Caco-2 (cell line): ENCODE measurements at regions of chr10 and their contacts with region 1.

Region 1: DNA sequence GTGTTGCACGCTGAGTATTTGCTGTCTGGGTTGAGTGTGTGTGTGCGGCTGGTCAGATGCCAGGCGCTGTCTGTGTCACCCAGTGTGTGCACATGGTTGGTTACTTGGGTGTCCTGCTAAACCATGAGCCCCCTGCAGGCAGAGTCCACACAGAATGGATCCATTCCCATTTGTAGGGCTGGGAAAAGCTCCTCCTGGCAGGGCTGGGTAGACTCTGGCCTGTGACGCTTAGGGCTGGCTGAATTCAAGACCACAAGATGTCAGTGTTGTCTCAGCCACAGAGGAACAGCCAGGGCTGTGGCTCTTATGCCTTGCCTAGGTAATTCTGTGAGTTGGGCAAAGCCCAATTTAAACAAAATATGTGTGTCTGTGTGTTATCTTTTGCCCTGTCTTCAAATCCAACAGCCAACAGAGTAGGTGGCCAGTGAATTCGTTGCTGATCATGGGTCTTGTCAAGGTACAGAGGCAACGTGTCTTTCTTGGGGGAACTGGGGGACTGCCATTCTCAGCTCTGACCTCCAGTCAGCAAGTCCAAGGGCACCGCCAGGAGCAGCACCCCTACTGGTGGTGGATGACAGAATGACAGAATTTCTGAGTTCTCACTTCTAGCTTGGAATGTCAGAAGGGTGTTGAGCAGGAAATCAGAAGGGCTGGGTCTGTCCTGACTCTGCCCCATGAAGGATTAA is 285.1 kb downstream of the CCSER2 start:
- DNase-seq: peak; percentile 78
- H3K4me3 ChIP-seq: no peak overlapping the region
- H3K4me3 Mint-ChIP-seq: no peak overlapping the region
- H3K27ac Mint-ChIP-seq: no peak overlapping the region
- H3K4me1 ChIP-seq: no peaks in the 10 kb centered on the region
- H3K4me1 Mint-ChIP-seq: no peaks in the 10 kb centered on the region
- H3K27me3 ChIP-seq: no peaks in the 10 kb centered on the region
- H3K27me3 Mint-ChIP-seq: peaks cover 7% of the 10 kb centered on the region
- CTCF ChIP-seq: peak; percentile 77 to 80

Region 2: GRCh38 chr10:84264611-84265141 is 348.8 kb before region 1 on chr10:
- CTCF ChIA-PET with region 1: interaction called, 4 read pairs
- POLR2A ChIA-PET with region 1: no interaction called
- intact Hi-C with region 1: loop called (anchors 10 kb)
- DNase-seq: peak; percentile 63 to 75
- H3K4me3 ChIP-seq: no peak overlapping the region
- H3K4me3 Mint-ChIP-seq: no peak overlapping the region
- H3K27ac Mint-ChIP-seq: no peak overlapping the region
- H3K4me1 ChIP-seq: no peaks in the 10 kb centered on the region
- H3K4me1 Mint-ChIP-seq: peaks cover 13% of the 10 kb centered on the region
- H3K27me3 ChIP-seq: no peaks in the 10 kb centered on the region; the same call in 1 of the 2 replicates
- H3K27me3 Mint-ChIP-seq: peaks cover 4% of the 10 kb centered on the region
- CTCF ChIP-seq: peak; percentile 94 to 96

Region 3: DNA sequence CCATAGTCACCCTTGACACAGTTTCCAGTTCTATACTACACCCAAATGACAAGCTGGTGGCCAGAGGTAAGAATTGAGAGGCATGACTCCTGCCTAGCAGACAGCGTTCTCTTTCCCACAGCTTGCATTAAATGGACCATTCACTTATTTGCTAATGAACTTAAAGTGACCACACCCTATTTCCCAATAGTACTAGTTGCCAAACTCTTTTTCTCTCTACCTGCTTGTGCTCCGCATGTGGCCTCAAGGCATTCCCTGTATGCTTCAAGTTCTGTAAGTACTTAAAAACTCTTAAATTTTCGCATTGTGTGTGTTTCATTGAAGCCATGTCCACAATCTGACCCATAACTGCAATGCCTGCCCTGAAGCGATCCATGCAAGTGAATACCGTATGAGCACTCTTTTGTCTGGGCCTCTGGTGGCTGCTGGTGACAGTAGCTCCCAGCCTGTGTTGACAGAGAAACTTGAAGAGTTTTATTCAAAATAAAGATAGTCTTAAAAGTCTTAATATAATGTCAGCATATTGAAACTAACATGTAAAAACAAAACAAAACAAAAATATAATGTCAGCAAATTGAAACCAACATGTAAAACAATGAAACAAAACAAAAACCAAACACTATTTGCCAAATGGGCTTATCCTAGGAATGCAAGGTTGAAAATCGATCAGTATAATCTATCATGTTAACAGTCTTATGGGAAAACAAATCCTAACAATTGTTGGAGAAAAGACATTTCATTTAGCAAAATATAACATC is 211.4 kb before region 1 on chr10:
- CTCF ChIA-PET with region 1: no interaction called
- POLR2A ChIA-PET with region 1: no interaction called
- intact Hi-C with region 1: no loop called
- DNase-seq: no peak
- H3K4me3 ChIP-seq: no peak overlapping the region
- H3K4me3 Mint-ChIP-seq: no peak overlapping the region
- H3K27ac Mint-ChIP-seq: no peak overlapping the region
- H3K4me1 ChIP-seq: no peaks in the 10 kb centered on the region
- H3K4me1 Mint-ChIP-seq: peaks cover 7% of the 10 kb centered on the region
- H3K27me3 ChIP-seq: no peaks in the 10 kb centered on the region
- H3K27me3 Mint-ChIP-seq: no peaks in the 10 kb centered on the region
- CTCF ChIP-seq: no peak

Region 4: GRCh38 chr10:84551437-84552120 is 61.9 kb before region 1 on chr10:
- CTCF ChIA-PET with region 1: interaction called, 5 read pairs
- POLR2A ChIA-PET with region 1: no interaction called
- intact Hi-C with region 1: loop called (anchors 2 kb)
- DNase-seq: no peak
- H3K4me3 ChIP-seq: no peak overlapping the region
- H3K4me3 Mint-ChIP-seq: no peak overlapping the region
- H3K27ac Mint-ChIP-seq: no peak overlapping the region
- H3K4me1 ChIP-seq: no peaks in the 10 kb centered on the region
- H3K4me1 Mint-ChIP-seq: no peaks in the 10 kb centered on the region
- H3K27me3 ChIP-seq: no peaks in the 10 kb centered on the region; the same call in 1 of the 2 replicates
- H3K27me3 Mint-ChIP-seq: peaks cover 4% of the 10 kb centered on the region
- CTCF ChIP-seq: no peak

Region 5: DNA sequence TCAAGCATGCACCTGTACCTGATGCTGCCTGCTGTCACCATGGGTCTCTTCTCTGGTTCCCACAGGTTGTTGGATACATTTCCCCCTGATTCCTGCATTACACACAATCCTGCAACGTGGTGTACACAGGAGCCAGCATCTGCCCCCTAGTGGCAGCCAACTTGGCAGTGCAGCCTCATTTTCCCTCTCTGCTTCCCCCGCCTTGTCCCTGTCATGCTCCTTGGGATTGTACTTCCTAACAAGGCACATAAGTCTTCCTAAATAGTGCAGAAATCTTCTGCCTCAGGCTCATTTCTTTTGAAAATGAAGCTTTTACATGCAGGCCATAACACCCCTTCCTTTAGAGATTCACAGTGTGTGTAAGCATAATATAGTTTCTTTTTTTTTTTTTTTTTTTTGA is 102.4 kb after region 1 on chr10:
- CTCF ChIA-PET with region 1: interaction called, 5 read pairs
- POLR2A ChIA-PET with region 1: no interaction called
- intact Hi-C with region 1: loop called (anchors 1 kb)
- DNase-seq: peak in 1 of 2 experiments; percentile 53
- H3K4me3 ChIP-seq: no peak overlapping the region
- H3K4me3 Mint-ChIP-seq: no peak overlapping the region
- H3K27ac Mint-ChIP-seq: no peak overlapping the region
- H3K4me1 ChIP-seq: no peaks in the 10 kb centered on the region
- H3K4me1 Mint-ChIP-seq: peaks cover 3% of the 10 kb centered on the region
- H3K27me3 ChIP-seq: peaks cover 1% of the 10 kb centered on the region; the same call in 1 of the 2 replicates
- H3K27me3 Mint-ChIP-seq: peaks cover 4% of the 10 kb centered on the region
- CTCF ChIP-seq: peak; percentile 42 to 61

Region 6: DNA sequence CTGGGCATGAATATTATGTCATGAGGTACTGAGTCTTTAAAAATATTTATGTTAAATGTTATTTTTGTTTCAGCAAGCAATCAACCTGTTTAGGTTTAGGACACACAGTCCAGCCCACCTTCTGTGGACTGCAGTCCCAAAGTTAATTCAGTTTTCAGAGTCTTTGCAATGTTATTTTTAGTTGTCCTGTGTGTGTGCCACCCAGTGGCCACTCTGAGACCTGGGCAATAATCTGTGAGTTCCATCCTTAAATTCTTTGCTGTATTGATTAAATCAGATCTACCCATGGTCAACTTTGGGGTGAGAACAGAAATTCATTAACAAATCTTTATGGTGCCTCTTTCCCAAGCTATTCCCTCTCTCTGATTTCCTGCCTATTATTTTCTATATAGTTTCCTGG is 130.0 kb after region 1 on chr10:
- CTCF ChIA-PET with region 1: interaction called, 8 read pairs
- POLR2A ChIA-PET with region 1: no interaction called
- intact Hi-C with region 1: loop called (anchors 1 kb)
- DNase-seq: peak in 1 of 2 experiments; percentile 10
- H3K4me3 ChIP-seq: no peak overlapping the region
- H3K4me3 Mint-ChIP-seq: no peak overlapping the region
- H3K27ac Mint-ChIP-seq: no peak overlapping the region
- H3K4me1 ChIP-seq: no peaks in the 10 kb centered on the region
- H3K4me1 Mint-ChIP-seq: peaks cover 7% of the 10 kb centered on the region
- H3K27me3 ChIP-seq: no peaks in the 10 kb centered on the region
- H3K27me3 Mint-ChIP-seq: peaks cover 8% of the 10 kb centered on the region
- CTCF ChIP-seq: peak; percentile 69 to 71

Region 7: DNA sequence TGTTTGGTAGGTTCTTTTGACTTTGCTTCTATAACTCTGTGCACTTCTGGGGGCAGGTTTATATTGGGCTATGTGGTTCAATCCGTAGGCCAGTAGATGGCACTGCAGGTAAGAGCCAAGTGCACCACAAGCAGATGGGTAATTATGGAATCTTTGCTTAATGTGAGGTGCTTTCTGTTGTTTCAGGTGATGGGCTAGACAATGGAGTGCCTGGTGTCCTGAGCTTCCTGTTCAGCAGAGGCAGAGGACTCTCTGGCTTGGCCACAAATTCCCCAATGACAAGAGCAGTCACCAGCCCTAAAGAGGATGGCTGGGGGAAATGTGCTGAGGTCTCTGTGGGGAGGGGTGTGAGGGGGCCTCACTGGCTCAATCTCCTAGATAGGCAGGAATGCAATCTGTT is 169.9 kb after region 1 on chr10:
- CTCF ChIA-PET with region 1: no interaction called
- POLR2A ChIA-PET with region 1: no interaction called
- intact Hi-C with region 1: loop called (anchors 1 kb)
- DNase-seq: peak; percentile 45 to 57
- H3K4me3 ChIP-seq: no peak overlapping the region
- H3K4me3 Mint-ChIP-seq: no peak overlapping the region
- H3K27ac Mint-ChIP-seq: no peak overlapping the region
- H3K4me1 ChIP-seq: peaks cover 13% of the 10 kb centered on the region
- H3K4me1 Mint-ChIP-seq: peaks cover 11% of the 10 kb centered on the region
- H3K27me3 ChIP-seq: no peaks in the 10 kb centered on the region; the same call in 1 of the 2 replicates
- H3K27me3 Mint-ChIP-seq: no peaks in the 10 kb centered on the region
- CTCF ChIP-seq: peak; percentile 75 to 85

Region 8: GRCh38 chr10:84820120-84820519 is 206.6 kb after region 1 on chr10:
- CTCF ChIA-PET with region 1: interaction called, 9 read pairs
- POLR2A ChIA-PET with region 1: no interaction called
- intact Hi-C with region 1: loop called (anchors 2 kb)
- DNase-seq: peak in 1 of 2 experiments; percentile 28
- H3K4me3 ChIP-seq: no peak overlapping the region
- H3K4me3 Mint-ChIP-seq: no peak overlapping the region
- H3K27ac Mint-ChIP-seq: no peak overlapping the region
- H3K4me1 ChIP-seq: no peaks in the 10 kb centered on the region; the same call in 1 of the 2 replicates
- H3K4me1 Mint-ChIP-seq: peaks cover 17% of the 10 kb centered on the region
- H3K27me3 ChIP-seq: no peaks in the 10 kb centered on the region
- H3K27me3 Mint-ChIP-seq: peaks cover 3% of the 10 kb centered on the region
- CTCF ChIP-seq: peak; percentile 40 to 48